Uterus (tissue), 4 donors: ENCODE measurements at regions of chr12 and their contacts with region 1.

Region 1: GRCh38 chr12:104215638-104216297 is at the start of gene TXNRD1:
- DNase-seq: peak; percentile 82 to 84
- H3K4me3 ChIP-seq: peak within 1 kb of the TSS; percentile 59 to 69
- H3K27ac ChIP-seq: peak within 1 kb of the TSS; percentile 89 to 97
- H3K4me1 ChIP-seq: peaks cover 0 to 5% of the 10 kb centered on the region in 2 donors
- H3K27me3 ChIP-seq: no peaks in the 10 kb centered on the region
- CTCF ChIP-seq: peak; percentile 91 to 93 (median 93)
- POLR2A ChIP-seq: peak; percentile 53 to 63
- total RNA-seq, gene TXNRD1: 76.0 to 141 (median 97.8) TPM

Region 2: DNA sequence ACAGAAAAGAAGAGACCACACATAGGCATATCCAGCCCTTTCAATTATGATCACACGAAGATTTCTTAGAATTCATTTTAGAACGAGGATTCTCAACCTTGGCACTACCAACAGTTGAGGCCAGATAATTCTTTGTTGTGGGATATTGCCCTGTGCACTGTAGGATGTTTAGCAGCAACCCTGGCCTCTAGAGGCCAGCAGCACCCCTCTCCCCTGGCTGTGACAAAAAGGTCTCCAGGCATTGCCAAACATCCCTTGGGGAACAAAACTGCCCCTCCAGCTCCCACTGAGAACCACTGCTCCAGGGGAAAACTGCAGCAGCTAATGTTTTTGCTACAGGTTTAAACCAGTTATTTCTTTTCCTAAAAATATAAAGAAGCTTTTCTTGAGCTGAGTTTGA is 381.9 kb before region 1 on chr12:
- intact Hi-C with region 1: no loop called
- DNase-seq: no peak
- H3K4me3 ChIP-seq: no peak overlapping the region
- H3K27ac ChIP-seq: peak overlapping the region; percentile 57 to 68
- H3K4me1 ChIP-seq: peaks cover 0 to 7% of the 10 kb centered on the region in 2 donors
- H3K27me3 ChIP-seq: no peaks in the 10 kb centered on the region
- CTCF ChIP-seq: no peak
- POLR2A ChIP-seq: no peak

Region 3: DNA sequence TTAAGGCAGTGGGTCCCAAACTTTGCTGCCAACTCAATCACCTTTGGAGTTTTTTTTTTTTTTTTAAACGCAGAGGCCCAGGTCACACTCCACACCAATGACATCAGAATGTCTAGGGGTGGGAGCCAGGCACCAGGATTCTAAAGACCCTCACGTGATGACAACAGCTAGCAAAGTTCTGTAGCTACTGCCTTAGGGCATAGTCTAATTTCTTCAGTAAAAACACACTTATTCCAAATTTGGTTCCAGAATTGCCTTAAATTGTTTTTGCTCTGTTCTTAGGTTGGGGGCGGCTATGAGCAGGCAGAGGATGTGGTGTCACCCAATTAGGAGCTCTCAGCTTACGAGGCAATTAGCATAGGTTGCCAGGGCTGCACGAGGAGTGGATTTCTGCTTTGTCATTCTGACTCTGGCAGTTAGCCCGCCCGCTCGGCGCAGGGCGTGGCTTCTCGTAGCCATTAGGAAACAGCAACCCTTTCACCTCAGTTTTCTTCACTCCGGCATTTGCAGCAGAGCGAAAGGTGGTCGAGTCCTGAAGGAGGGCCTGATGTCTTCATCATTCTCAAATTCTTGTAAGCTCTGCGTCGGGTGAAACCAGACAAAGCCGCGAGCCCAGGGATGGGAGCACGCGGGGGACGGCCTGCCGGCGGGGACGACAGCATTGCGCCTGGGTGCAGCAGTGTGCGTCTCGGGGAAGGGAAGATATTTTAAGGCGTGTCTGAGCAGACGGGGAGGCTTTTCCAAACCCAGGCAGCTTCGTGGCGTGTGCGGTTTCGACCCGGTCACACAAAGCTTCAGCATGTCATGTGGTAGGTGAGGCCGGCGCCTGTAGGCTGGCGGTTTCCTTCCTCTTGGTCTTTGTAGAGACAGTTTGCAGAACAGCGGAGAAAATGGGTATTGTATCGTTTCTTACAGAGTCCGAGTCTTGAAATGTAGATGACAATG is 71.0 kb after region 1 on chr12:
- intact Hi-C with region 1: loop called (anchors 5 kb)
- DNase-seq: peak; percentile 93 to 95
- H3K4me3 ChIP-seq: peak overlapping the region; percentile 63 to 78
- H3K27ac ChIP-seq: peak overlapping the region; percentile 86 to 91
- H3K4me1 ChIP-seq: peaks cover 0 to 11% of the 10 kb centered on the region in 2 donors
- H3K27me3 ChIP-seq: no peaks in the 10 kb centered on the region
- CTCF ChIP-seq: no peak
- POLR2A ChIP-seq: peak; percentile 59 to 67

Region 4: DNA sequence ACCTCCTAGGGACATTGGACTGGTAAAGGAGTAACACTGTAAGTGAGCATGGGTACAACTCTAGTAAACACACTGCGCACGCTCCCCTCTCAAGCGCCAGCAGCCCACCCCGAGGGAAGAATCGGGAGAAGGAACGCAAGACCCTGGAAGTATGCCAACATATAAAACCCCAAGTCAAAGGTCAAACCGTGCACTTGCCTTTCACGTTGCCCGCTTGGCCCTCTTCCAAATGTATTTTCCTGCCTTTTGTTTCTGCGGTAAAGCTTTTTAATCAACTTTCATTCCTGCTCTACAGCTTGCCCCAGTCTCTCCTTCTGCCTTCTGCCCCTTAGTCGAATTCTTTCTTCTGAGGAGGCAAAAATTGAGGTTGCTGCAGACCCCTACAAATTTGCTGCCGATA is 223.4 kb after region 1 on chr12:
- intact Hi-C with region 1: no loop called
- DNase-seq: no peak
- H3K4me3 ChIP-seq: no peak overlapping the region
- H3K27ac ChIP-seq: no peak overlapping the region
- H3K4me1 ChIP-seq: no peaks in the 10 kb centered on the region
- H3K27me3 ChIP-seq: no peaks in the 10 kb centered on the region
- CTCF ChIP-seq: no peak
- POLR2A ChIP-seq: no peak